Mammary epithelial cell (primary cell): ENCODE measurements at regions of chr17 and their contacts with region 1.

Region 1: GRCh38 chr17:50094753-50095619 is at the start of gene PDK2:
- DNase-seq: peak; percentile 87
- H3K4me3 ChIP-seq: peak within 1 kb of the TSS in 2 of 3 experiments; percentile 13 to 54
- H3K27ac ChIP-seq: no peak within 1 kb of the TSS
- H3K4me1 ChIP-seq: peaks cover 9% of the 10 kb centered on the region
- H3K27me3 ChIP-seq: no peaks in the 10 kb centered on the region
- CTCF ChIP-seq: no peak
- total RNA-seq, gene PDK2: 18.2 to 24.8 TPM

Region 2: DNA sequence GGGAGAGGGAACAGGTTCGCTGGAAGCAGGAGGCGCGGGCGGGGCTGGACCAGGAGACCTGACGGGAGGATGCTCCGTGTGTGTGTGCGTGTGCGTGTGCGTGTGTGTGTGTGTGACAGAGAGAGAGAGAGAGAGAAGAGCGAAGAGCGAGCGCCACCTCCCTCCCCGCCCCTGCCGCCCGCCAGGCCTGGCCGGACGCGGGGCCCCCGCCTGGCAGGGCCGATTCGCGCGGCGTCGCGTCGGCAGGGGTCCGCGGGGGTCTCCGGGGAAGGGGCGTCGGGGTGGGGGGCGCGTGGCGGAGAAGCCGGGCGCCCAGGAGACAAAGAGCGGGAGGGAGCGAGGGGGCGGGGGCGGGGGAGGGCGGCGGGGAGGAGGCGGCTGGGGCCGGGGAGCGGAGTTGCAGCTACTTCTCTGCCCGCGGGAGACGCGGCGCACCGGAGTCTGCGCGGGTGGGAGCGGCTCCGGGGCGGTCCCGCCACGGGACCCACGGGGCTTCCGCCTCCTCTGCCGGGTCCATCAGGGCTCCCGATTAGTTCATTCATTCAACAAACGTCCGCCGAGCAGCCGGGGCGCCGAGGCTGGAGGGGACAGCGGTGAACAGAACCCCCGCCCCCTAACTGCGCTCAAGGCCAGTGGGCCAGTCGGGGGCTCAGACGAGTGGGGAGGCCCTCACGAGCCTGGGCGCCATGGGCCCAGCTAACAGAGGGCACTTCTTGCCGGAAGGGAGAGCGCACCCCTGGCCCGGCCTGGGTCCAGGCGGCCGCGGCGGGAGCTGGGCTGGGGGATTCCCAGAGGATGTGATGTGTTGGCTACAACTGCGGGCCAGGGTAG is 35.0 kb after region 1 on chr17 and contains the start of gene SAMD14:
- CTCF ChIA-PET with region 1: no interaction called
- dilution Hi-C with region 1: loop called (anchors 5 kb)
- in situ Hi-C with region 1: no loop called
- intact Hi-C with region 1: no loop called
- DNase-seq: no peak
- H3K4me3 ChIP-seq: no peak within 1 kb of the TSS
- H3K27ac ChIP-seq: no peak within 1 kb of the TSS
- H3K4me1 ChIP-seq: peaks cover 10% of the 10 kb centered on the region
- H3K27me3 ChIP-seq: no peaks in the 10 kb centered on the region
- CTCF ChIP-seq: no peak
- total RNA-seq, gene SAMD14: 0.12 to 0.33 TPM

Region 3: DNA sequence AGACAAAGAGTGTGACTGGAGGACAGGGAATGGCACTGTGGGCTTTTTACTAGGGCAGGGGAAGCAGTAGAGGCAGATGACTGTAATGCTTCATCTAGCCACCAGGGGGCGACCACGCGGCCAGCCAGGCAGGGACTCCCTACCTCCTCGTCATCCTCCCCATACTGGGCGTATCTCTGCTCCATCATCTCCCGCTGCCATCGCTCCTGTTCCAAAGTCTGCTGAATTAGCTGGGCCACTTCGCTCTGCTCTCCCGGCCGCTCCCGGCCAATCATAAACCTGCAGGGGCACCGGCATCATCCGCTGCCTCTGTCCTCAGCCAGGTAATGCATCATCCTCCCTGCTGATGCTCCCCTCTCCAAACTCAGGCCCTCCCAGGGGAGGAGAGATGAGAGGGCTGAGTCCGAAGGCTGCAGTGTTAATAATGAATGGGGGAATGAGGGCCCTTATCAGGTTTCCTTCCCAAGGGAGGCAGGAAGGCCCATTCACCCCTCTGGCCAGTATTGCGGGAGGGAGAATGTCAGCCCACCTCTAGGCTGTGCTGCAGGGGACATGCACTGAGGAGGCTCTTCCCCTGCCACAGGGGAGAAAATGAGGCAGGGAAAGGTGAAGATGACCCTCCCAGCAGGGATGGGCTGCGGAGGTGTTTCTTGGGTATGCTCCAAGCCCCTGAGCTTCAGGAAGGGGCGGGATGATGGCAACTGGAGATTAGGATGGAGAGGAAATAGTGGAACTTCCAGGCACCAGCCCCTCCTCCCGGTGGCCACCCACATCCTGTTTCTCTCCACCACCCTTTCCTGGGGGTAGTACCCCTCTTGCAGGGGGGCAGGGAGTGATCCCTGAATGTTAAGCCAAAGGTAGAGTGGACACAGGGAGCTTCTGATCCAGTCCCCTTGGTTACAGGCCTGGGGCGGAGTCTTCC is 45.2 kb after region 1 on chr17:
- CTCF ChIA-PET with region 1: interaction called, 8 read pairs
- dilution Hi-C with region 1: no loop called
- in situ Hi-C with region 1: no loop called
- intact Hi-C with region 1: loop called (anchors 2 kb)
- DNase-seq: peak; percentile 57
- H3K4me3 ChIP-seq: no peak overlapping the region
- H3K27ac ChIP-seq: no peak overlapping the region
- H3K4me1 ChIP-seq: no peaks in the 10 kb centered on the region
- H3K27me3 ChIP-seq: no peaks in the 10 kb centered on the region
- CTCF ChIP-seq: peak; percentile 82 to 86

Region 4: GRCh38 chr17:50151041-50151936 is 56.3 kb after region 1 on chr17:
- CTCF ChIA-PET with region 1: no interaction called
- dilution Hi-C with region 1: no loop called
- in situ Hi-C with region 1: no loop called
- intact Hi-C with region 1: loop called (anchors 1 kb)
- DNase-seq: peak; percentile 84
- H3K4me3 ChIP-seq: peak overlapping the region; percentile 18 to 75 (median 75)
- H3K27ac ChIP-seq: peak overlapping the region; percentile 19
- H3K4me1 ChIP-seq: peaks cover 67% of the 10 kb centered on the region
- H3K27me3 ChIP-seq: no peaks in the 10 kb centered on the region
- CTCF ChIP-seq: peak; percentile 35 to 71

Region 5: GRCh38 chr17:50161023-50161910 is 66.3 kb after region 1 on chr17:
- CTCF ChIA-PET with region 1: interaction called, 4 read pairs
- dilution Hi-C with region 1: no loop called
- in situ Hi-C with region 1: no loop called
- intact Hi-C with region 1: loop called (anchors 1 kb)
- DNase-seq: peak; percentile 81
- H3K4me3 ChIP-seq: peak overlapping the region; percentile 10 to 61 (median 55)
- H3K27ac ChIP-seq: no peak overlapping the region
- H3K4me1 ChIP-seq: peaks cover 12% of the 10 kb centered on the region
- H3K27me3 ChIP-seq: no peaks in the 10 kb centered on the region
- CTCF ChIP-seq: peak; percentile 84 to 96

Region 6: DNA sequence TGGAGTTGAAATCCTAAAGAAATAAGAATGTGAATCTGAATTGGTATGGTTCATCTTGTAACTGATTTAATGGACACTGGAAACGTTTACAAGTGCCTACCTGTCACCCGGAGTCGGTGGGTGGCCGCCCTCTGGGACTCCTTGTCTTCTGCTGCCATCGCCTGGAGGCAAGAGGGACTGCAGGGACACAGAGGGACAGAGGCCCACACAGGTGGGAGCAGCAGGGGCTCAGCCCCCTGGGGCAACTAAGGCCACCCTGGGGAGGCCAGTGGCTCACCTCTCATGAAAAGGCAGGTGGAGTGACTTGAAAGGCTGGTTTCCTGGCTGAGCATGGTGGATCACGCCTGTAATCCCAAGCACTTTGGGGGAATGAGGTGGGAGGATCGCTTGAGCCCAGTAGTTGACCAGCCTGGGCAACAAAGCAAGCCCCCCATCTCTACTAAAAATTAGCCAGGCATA is 202.4 kb after region 1 on chr17:
- CTCF ChIA-PET with region 1: no interaction called
- dilution Hi-C with region 1: no loop called
- in situ Hi-C with region 1: no loop called
- intact Hi-C with region 1: loop called (anchors 1 kb)
- DNase-seq: no peak
- H3K4me3 ChIP-seq: no peak overlapping the region
- H3K27ac ChIP-seq: no peak overlapping the region
- H3K4me1 ChIP-seq: no peaks in the 10 kb centered on the region
- H3K27me3 ChIP-seq: no peaks in the 10 kb centered on the region
- CTCF ChIP-seq: peak; percentile 82 to 93

Region 7: DNA sequence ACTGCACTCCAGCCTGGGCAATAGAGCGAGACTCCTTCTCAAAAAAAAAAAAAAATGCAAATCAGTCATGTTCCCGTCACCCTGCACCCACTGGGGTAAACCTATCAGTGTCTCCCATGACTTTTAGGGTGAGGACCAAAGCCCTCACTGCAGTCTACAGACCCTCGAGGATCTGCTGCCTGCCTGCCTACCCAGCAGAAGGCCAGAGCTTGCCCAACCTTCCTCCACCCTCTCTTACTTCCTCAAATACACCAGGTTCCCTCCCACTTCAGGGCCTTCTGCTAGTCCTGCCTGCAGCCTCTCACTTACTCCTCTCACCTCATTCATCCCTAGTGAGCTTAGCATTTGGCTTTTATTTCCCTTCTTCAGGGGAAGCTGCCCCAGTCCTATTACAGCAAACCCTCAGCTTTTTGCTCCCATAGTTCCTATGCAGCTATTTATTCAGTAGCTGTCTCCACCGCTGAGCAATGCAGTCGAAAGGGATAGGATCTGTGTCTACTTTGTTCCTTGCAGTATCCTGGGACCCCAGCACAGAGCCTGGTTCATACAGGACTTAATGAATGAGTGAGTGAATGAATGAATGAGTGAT is 789.0 kb after region 1 on chr17:
- CTCF ChIA-PET with region 1: interaction called, 10 read pairs
- dilution Hi-C with region 1: no loop called
- in situ Hi-C with region 1: no loop called
- intact Hi-C with region 1: no loop called
- DNase-seq: no peak
- H3K4me3 ChIP-seq: no peak overlapping the region
- H3K27ac ChIP-seq: peak overlapping the region; percentile 5
- H3K4me1 ChIP-seq: peaks cover 24% of the 10 kb centered on the region
- H3K27me3 ChIP-seq: no peaks in the 10 kb centered on the region
- CTCF ChIP-seq: no peak